ENCODE measurements at regions of chr10 and their contacts with region 1.

Region 1: DNA sequence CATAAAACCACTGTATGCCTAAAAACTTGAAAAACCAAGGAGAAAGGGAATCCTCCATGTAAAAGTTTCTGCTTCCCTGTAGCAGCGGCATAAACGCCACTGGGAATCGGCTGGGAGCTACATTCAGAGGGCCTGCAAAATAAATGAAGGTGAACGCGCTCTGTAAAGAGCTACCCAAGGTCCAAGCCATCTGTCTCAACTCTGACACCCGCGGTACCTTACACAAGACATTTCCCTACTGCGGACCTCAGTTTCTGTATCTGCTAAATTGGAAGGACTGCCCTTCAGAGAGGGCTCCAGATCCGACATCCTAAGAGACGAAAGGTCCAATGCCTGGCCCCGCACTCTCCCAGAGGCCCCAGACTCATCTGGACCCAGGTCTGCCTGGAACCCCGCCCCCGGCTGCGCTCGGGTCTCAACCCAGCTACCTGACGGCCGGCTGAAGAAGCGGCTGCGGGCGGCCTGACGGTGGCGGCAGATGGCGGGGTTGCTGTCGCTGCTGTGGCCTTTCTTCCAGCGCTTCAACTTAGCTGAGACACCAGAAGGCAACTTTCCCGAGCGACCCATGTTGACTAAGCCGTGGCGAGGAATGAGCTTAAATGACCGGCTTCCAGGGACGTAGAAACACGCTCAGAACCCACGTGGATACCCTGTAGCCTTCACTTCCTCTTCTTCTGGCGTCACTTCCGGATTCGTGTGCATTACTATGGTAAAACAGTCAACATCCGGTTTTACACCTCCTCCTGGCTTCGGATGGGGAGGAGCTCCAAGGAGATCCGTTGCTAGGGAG is at the start of gene RRP12:
- DNase-seq: peak; percentile 99
- ATAC-seq: peak; percentile 92
- H3K4me3 ChIP-seq: peak within 1 kb of the TSS; percentile 72 to 92 (median 87)
- H3K27ac ChIP-seq: peak within 1 kb of the TSS; percentile 83
- H3K4me1 ChIP-seq: peaks cover 13% of the 10 kb centered on the region; the same call in 1 of the 2 replicates
- H3K27me3 ChIP-seq: no peaks in the 10 kb centered on the region; a peak in 1 of 5 replicates
- CTCF ChIP-seq: no peak; the same call in 1 of the 2 replicates
- EP300 ChIP-seq: no peak
- POLR2A ChIP-seq: peak; percentile 61 to 81; a peak in 3 of 4 replicates
- RAD21 ChIP-seq: no peak; the same call in 1 of the 2 replicates
- total RNA-seq, gene RRP12: 30.6 and 39.4 TPM in 2 replicates

Region 2: GRCh38 chr10:97327348-97328294 is 73.2 kb before region 1 on chr10:
- CTCF ChIA-PET with region 1: no interaction called
- POLR2A ChIA-PET with region 1: interaction called, 11 read pairs
- in situ Hi-C with region 1: no loop called
- intact Hi-C with region 1: no loop called
- DNase-seq: peak; percentile 96
- ATAC-seq: peak; percentile 87
- H3K4me3 ChIP-seq: peak overlapping the region in 1 of 3 experiments; percentile 59; a peak in 2 of 6 replicates
- H3K27ac ChIP-seq: peak overlapping the region; percentile 91
- H3K4me1 ChIP-seq: peaks cover 74% of the 10 kb centered on the region
- H3K27me3 ChIP-seq: no peaks in the 10 kb centered on the region
- CTCF ChIP-seq: no peak
- EP300 ChIP-seq: peak; percentile 84 to 96
- POLR2A ChIP-seq: no peak
- RAD21 ChIP-seq: peak; percentile 20; the same call in 1 of the 2 replicates

Region 3: GRCh38 chr10:97425964-97426775 is 25.3 kb after region 1 on chr10 and contains the start of gene PGAM1:
- CTCF ChIA-PET with region 1: no interaction called
- POLR2A ChIA-PET with region 1: interaction called, 6 read pairs
- in situ Hi-C with region 1: no loop called
- intact Hi-C with region 1: loop called (anchors 1 kb)
- DNase-seq: peak; percentile 89
- ATAC-seq: peak; percentile 83
- H3K4me3 ChIP-seq: peak within 1 kb of the TSS; percentile 86 to 98 (median 96)
- H3K27ac ChIP-seq: peak within 1 kb of the TSS; percentile 89
- H3K4me1 ChIP-seq: peaks cover 46% of the 10 kb centered on the region
- H3K27me3 ChIP-seq: no peaks in the 10 kb centered on the region; a peak in 1 of 5 replicates
- CTCF ChIP-seq: peak; percentile 96
- EP300 ChIP-seq: 0 out of 4 replicates have a peak, but pooled peaks of 1 of the 2 experiments have one; percentile 30
- POLR2A ChIP-seq: peak; percentile 67 to 81
- RAD21 ChIP-seq: peak; percentile 26
- total RNA-seq, gene PGAM1: 354 and 442 TPM in 2 replicates